ENCODE measurements at regions of chr6 and their contacts with region 1.

Region 1: DNA sequence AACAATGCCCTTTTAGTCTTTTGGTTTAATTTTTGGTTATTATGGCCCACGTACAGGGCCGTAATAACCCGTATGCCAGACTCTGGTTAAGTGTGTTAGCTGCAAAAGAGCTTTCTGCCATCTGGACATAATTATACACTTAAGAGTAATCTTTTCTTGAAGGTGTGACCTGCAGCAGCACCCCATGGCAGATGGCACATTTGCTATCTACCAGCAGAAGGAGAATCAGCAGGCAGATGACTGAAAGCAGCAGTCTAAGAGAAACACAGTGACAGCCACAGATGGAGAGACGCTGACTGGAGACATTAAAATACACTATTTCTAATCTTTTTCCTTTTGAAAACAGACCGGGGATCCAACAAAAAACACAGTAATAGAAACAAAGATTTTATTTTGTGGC is 18.7 kb downstream of the ASF1A start:
- DNase-seq: no peak
- H3K4me3 ChIP-seq: no peak overlapping the region
- H3K27ac ChIP-seq: no peak overlapping the region
- H3K4me1 ChIP-seq: no peaks in the 10 kb centered on the region
- H3K27me3 ChIP-seq: no peaks in the 10 kb centered on the region
- CTCF ChIP-seq: no peak

Region 2: GRCh38 chr6:119521251-119521650 is 608.6 kb after region 1 on chr6:
- CTCF ChIA-PET with region 1: no interaction called
- POLR2A ChIA-PET with region 1: no interaction called
- intact Hi-C with region 1: loop called (anchors 5 kb)
- DNase-seq: no peak
- H3K4me3 ChIP-seq: no peak overlapping the region
- H3K27ac ChIP-seq: no peak overlapping the region
- H3K4me1 ChIP-seq: no peaks in the 10 kb centered on the region
- H3K27me3 ChIP-seq: no peaks in the 10 kb centered on the region
- CTCF ChIP-seq: no peak